WTC11 (cell line): ENCODE measurements at regions of chr1 and their contacts with region 1.

Region 1: DNA sequence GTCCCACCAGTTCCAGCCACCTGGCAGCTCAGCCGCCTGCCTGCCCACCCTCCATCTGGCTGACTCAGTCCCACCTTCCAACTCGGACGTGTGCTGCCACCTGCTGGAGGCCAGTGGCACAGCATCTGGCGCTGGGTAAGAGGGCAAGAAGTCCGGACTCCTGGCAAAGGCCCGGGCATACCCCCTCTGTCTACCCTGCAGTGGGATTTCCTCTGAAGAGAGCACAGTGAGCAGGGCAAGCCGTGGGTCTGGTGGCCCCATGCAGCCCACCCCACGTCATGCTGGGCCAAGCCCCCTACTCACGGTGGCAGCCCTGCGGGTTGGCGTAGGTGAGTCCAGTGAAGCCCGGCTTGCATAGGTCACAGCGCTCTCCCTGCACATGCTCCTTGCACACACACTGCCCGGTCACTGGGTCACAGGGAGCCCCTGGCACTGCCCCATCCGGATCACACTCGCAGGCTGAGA is 24.5 kb downstream of the LAMB3 start:
- DNase-seq: peak; percentile 95
- ATAC-seq: peak; percentile 83
- H3K4me3 Mint-ChIP-seq: no peak overlapping the region
- H3K27ac Mint-ChIP-seq: no peak overlapping the region
- H3K4me1 Mint-ChIP-seq: peaks cover 43% of the 10 kb centered on the region
- H3K27me3 Mint-ChIP-seq: peaks cover 3% of the 10 kb centered on the region; the same call in 1 of the 2 replicates
- CTCF ChIP-seq: peak; percentile 98

Region 2: GRCh38 chr1:209585672-209586071 is 42.1 kb before region 1 on chr1:
- CTCF ChIA-PET with region 1: interaction called, 76 read pairs
- POLR2A ChIA-PET with region 1: interaction called, 3 read pairs
- DNase-seq: peak; percentile 49
- ATAC-seq: peak; percentile 51
- H3K4me3 Mint-ChIP-seq: no peak overlapping the region
- H3K27ac Mint-ChIP-seq: no peak overlapping the region
- H3K4me1 Mint-ChIP-seq: no peaks in the 10 kb centered on the region; the same call in 1 of the 2 replicates
- H3K27me3 Mint-ChIP-seq: no peaks in the 10 kb centered on the region; the same call in 1 of the 2 replicates
- CTCF ChIP-seq: no peak

Region 3: DNA sequence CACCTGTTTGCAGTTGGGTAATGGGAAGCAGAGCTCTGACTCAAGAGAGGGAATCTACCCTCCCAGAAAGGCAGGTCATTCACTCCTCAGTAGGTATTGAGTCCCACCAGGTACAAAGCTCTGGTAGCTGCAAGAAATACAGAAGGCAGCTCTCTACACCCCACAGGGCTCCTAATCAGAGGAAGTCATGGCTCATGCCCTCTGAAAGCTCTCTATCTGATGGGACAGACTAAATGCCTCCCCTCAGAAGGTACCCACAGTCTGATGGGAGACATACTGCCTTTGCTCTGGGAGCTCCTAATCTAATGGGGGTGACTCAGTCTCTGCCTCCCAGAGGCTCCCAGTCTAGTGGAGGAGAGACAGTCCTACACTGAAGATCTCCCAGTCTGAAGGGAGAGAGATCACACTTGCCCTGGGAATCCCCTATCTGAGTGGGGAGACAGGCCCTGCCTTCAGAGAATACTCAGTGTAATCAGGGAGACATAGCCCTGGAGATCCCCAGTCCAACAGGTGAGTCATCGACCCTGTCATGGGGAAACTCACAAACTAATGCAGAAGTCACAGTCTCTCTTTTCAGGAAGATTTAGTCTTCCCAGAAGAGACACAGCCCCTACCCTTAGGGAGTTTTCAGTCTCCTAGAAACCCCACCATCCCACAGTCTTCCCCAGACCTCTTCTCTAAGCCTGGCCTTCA is 20.5 kb before region 1 on chr1:
- CTCF ChIA-PET with region 1: interaction called, 17 read pairs
- POLR2A ChIA-PET with region 1: no interaction called
- DNase-seq: no peak
- ATAC-seq: no peak
- H3K4me3 Mint-ChIP-seq: no peak overlapping the region
- H3K27ac Mint-ChIP-seq: no peak overlapping the region
- H3K4me1 Mint-ChIP-seq: no peaks in the 10 kb centered on the region
- H3K27me3 Mint-ChIP-seq: no peaks in the 10 kb centered on the region
- CTCF ChIP-seq: no peak

Region 4: DNA sequence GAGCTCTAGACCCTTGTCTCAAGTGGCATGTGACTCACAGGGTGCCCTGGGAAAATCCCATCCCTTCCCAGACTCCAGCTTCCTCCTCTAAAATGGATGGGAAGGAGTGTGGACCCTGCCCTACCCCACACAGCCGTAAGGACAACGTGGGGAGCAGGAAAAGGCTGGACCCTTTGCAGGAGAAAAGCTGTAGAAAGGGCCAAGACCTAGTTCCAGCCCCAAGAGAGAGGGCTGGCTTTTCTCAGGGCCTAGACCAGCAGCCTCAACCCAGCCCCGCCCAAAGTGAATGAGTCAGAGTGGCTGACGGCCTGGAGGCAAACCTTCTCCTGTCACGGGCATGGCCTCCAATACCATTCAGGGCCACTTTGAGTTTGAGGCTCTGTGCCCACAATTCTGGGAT is 23.4 kb after region 1 on chr1:
- CTCF ChIA-PET with region 1: interaction called, 17 read pairs
- POLR2A ChIA-PET with region 1: no interaction called
- DNase-seq: no peak
- ATAC-seq: no peak
- H3K4me3 Mint-ChIP-seq: no peak overlapping the region
- H3K27ac Mint-ChIP-seq: peak overlapping the region; percentile 71; the same call in 1 of the 2 replicates
- H3K4me1 Mint-ChIP-seq: peaks cover 29% of the 10 kb centered on the region
- H3K27me3 Mint-ChIP-seq: peaks cover 2% of the 10 kb centered on the region; the same call in 1 of the 2 replicates
- CTCF ChIP-seq: no peak